ENCODE measurements at regions of chr13 and their contacts with region 1.

Region 1: DNA sequence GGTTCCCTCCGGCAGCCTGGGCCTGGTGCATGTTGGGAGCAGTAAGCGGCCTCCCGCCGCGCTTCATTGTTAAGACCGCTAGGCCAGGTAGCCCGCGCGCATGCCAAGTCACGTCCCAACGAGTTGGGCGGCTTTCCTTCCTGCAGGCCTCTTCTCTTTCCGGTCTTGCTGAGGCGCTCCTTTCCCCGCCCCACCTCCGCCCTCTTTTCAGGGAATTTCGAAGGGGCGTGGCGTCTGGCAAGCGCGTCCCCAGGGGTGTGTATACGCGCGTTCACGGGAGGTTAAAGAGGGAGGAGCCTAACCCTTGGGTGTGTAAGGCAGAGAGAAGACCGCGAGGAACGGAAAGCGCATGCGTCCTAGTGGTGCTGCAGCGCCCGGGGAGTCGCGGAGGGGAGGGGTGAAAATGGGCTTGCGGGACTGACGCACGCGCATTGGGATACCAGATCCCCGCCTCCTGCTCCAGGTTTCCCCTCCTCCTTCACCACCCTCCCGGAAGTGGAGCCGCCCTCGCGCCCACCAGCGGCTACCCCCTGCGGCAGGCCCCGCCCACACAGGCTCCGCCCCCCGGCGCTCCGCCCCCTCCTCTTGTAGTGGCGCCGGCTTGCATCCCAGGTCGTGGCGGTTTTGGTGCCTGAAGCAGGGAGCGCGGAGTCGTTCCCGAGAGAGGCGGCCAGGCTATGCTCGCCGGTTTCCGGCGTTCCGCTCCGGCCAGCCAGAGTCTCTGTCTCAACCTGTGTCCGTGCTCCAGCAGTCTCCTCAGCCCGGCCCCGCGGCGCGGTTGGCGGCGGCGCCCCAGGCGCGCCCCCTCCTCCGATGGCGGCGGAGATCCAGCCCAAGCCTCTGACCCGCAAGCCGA is at the start of gene WDFY2:
- DNase-seq: peak; percentile 100
- ATAC-seq: peak; percentile 95 to 98 (median 97)
- H3K4me3 ChIP-seq: peak within 1 kb of the TSS; percentile 76 to 96 (median 94)
- H3K27ac ChIP-seq: peak within 1 kb of the TSS; percentile 68 to 96 (median 88)
- H3K4me1 ChIP-seq: peaks cover 0 to 46% (median 12%) of the 10 kb centered on the region in 12 donors
- H3K27me3 ChIP-seq: no peaks in the 10 kb centered on the region
- CTCF ChIP-seq: peak in 7 of 12 donors; percentile 4 to 45 (median 28)
- POLR2A ChIP-seq: peak in 1 of 2 donors; percentile 92
- total RNA-seq, gene WDFY2: 3.9 to 12.6 (median 7.4) TPM

Region 2: DNA sequence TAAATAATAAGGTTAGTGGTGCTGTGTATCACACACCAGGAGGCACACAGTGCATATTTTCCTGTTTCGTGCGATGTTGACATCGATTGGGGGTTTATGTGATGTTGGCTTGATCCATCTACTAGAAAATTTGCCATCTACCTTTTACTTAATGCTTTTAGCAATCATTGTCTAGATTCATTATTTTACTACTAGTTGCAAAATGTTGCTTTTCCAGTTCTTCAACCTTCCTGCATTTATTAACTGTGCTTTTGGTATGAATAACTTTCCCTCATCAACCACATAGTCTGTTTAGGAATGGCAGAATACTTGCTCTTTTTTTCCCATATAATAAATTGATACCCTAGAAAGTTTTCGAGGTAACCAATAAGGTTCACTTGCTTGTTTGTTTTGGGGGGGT is 490.5 kb before region 1 on chr13:
- intact Hi-C with region 1: no loop called
- DNase-seq: no peak
- ATAC-seq: no peak
- H3K4me3 ChIP-seq: no peak overlapping the region
- H3K27ac ChIP-seq: no peak overlapping the region
- H3K4me1 ChIP-seq: no peaks in the 10 kb centered on the region
- H3K27me3 ChIP-seq: no peaks in the 10 kb centered on the region
- CTCF ChIP-seq: no peak
- POLR2A ChIP-seq: no peak

Region 3: DNA sequence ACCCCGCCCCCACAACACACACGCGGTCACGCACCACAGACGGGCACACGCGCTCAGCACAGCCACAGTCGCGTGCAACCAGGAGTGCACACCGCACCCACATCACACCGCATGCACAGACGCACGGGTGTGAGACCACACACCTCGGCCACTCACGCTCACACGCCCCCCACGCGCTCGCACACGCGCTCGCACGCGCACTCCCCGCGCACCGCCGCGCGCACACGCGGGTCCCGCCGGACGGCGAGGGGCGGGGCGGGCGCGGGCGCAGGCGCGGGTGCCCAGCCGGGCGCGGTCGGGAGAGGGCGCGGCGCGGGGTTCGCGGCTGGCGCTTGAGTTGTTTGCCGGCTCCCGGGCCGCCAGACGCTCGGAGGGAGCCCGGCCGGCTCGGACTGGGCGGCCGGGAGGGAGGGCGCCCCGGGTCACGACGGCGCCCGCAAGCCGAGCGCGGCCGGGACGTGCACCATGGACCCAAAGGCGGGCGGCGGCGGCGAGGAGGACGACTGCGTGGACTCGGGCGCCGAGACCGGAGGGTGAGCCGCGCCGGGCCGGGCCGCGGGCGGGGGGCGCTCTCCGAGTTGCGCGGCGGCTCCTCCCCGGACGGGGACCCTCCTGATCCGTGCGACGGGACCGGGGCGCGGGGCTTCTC is 361.9 kb before region 1 on chr13 and contains the start of gene FAM124A:
- intact Hi-C with region 1: loop called in 1 of 10 experiments (anchors 10 kb)
- DNase-seq: peak; percentile 46 to 74 (median 58)
- ATAC-seq: peak in 3 of 4 donors; percentile 65 to 94 (median 93)
- H3K4me3 ChIP-seq: peak within 1 kb of the TSS; percentile 77 to 99 (median 87)
- H3K27ac ChIP-seq: peak within 1 kb of the TSS; percentile 47 to 88 (median 76)
- H3K4me1 ChIP-seq: peaks cover 0 to 28% (median 10%) of the 10 kb centered on the region in 12 donors
- H3K27me3 ChIP-seq: peaks cover 0 to 24% (median 0%) of the 10 kb centered on the region in 9 donors
- CTCF ChIP-seq: peak in 10 of 12 donors; percentile 20 to 61 (median 33)
- POLR2A ChIP-seq: peak in 1 of 2 donors; percentile 39
- total RNA-seq, gene FAM124A: 5.6 to 16.8 (median 8.0) TPM

Region 4: DNA sequence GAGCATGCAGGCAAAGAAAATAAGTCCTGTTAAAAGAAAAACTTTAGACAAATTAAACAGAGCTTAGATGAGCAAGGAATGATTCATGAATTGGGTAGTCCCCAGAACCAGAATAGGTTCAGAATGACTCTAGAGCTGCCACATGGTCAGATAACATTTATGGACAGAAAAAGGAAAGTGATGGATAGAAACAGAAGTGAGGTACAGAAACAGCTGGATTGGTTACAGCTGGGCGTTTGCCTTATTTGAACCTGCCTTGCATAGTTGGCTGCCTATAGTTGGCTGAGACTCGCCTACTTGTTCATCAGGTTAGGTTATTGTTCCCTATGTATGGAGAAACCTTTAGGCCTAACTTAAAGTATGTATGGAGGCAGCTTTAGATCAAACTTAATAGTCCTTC is 35.5 kb after region 1 on chr13:
- intact Hi-C with region 1: loop called in 1 of 10 experiments (anchors 5 kb)
- DNase-seq: no peak
- ATAC-seq: peak in 3 of 4 donors; percentile 27 to 63 (median 31)
- H3K4me3 ChIP-seq: no peak overlapping the region
- H3K27ac ChIP-seq: peak overlapping the region in 9 of 12 donors; percentile 26 to 62 (median 43)
- H3K4me1 ChIP-seq: peaks cover 0 to 68% (median 29%) of the 10 kb centered on the region in 12 donors
- H3K27me3 ChIP-seq: no peaks in the 10 kb centered on the region
- CTCF ChIP-seq: no peak
- POLR2A ChIP-seq: no peak

Region 5: GRCh38 chr13:51729866-51730546 is 145.9 kb after region 1 on chr13:
- intact Hi-C with region 1: loop called in 8 of 10 experiments (anchors 2 to 10 kb)
- DNase-seq: peak in 2 of 5 donors; percentile 36 to 47
- ATAC-seq: peak in 3 of 4 donors; percentile 34 to 76 (median 70)
- H3K4me3 ChIP-seq: peak overlapping the region in 4 of 12 donors; percentile 8 to 13 (median 12)
- H3K27ac ChIP-seq: peak overlapping the region; percentile 11 to 75 (median 53)
- H3K4me1 ChIP-seq: peaks cover 0 to 55% (median 27%) of the 10 kb centered on the region in 12 donors
- H3K27me3 ChIP-seq: no peaks in the 10 kb centered on the region
- CTCF ChIP-seq: no peak
- POLR2A ChIP-seq: no peak

Region 6: GRCh38 chr13:51797664-51798488 is 213.8 kb after region 1 on chr13:
- intact Hi-C with region 1: loop called in 9 of 10 experiments (anchors 2 to 10 kb)
- DNase-seq: peak in 1 of 5 donors; percentile 45
- ATAC-seq: peak in 1 of 4 donors; percentile 2
- H3K4me3 ChIP-seq: no peak overlapping the region
- H3K27ac ChIP-seq: no peak overlapping the region
- H3K4me1 ChIP-seq: peaks cover 4 to 34% (median 22%) of the 10 kb centered on the region in 12 donors
- H3K27me3 ChIP-seq: no peaks in the 10 kb centered on the region
- CTCF ChIP-seq: peak in 10 of 12 donors; percentile 23 to 48 (median 36)
- POLR2A ChIP-seq: no peak

Region 7: DNA sequence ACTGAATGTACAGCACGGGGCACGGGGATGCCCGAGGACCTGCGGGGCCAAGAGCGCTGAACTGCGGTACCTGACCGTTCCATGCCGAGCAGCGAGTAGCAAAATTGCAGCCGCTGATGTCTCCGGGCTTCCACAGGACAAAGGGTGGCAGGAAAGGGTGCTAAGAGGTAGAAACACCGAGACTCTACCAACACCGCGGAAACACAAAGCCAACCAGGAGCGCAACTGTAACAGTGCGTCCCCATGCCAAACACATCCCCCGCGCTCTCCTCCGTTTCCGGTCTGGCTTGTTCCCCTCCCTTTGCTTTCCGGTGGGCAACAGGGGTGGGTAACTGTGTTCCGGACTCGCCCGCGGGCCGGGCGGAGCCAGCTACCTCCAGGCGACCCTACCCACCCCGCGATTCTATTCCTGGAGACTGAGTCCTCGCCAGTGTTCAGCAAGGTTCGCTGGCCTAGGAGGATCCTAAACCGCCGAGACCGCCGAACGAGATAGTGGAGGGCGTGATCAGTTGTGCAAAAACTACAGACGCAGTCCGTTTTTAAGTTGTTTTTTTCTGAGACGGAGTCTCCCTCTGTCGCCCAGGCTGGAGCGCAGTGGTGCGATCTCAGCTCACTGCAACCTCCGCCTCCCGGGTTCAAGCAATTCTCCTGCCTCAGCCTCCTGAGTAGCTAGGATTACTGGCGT is 610.2 kb after region 1 on chr13:
- intact Hi-C with region 1: loop called in 1 of 10 experiments (anchors 10 kb)
- DNase-seq: peak; percentile 85 to 92 (median 87)
- ATAC-seq: peak; percentile 91 to 95 (median 94)
- H3K4me3 ChIP-seq: peak overlapping the region; percentile 50 to 98 (median 82)
- H3K27ac ChIP-seq: peak overlapping the region; percentile 63 to 90 (median 84)
- H3K4me1 ChIP-seq: peaks cover 0 to 29% (median 18%) of the 10 kb centered on the region in 12 donors
- H3K27me3 ChIP-seq: no peaks in the 10 kb centered on the region
- CTCF ChIP-seq: peak in 2 of 12 donors; percentile 25 to 32
- POLR2A ChIP-seq: peak in 1 of 2 donors; percentile 46